ENCODE measurements at regions of chr3 and their contacts with region 1.

Region 1: DNA sequence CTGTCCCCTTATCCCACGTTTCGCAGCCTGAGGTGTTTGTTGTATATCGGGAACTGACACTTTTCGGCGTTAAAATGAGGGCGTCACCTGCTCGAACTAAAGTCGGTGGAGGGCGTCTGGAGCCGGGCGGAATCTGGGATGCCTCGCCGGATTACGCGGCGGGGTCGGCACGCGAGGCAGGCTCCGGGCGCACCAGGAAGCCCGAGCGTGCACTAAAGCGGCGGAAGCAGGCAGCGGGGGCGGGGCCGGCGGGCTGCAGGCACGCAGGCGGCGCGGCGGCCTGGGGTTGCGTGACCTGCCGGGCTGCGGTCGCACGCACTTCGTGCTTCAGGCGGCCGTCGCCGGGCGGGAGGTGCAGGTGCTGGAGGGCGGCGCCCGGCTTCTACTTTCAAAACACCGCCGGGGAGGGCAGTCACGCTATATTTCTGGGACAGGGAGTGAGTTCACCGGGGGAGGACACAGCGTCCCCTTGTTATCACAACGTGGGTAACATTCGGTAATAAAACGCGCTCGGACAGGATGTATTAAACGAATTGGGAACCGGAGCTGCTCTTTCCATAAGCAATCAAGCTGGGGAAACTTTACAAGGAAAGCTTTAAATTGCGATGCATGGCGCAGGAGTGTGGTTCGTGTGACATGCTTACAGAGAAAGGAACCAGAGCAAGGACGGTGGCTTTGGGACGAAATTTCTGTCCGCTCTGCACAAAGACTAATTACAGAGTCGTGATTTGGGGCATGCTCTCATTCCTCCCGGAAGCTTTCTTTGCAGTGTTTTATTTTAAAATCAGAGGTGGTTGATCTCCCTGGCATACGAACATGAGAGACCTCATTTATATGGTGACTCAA is 9.1 kb upstream of the LEKR1 start:
- DNase-seq: peak; percentile 85
- H3K4me3 ChIP-seq: peak overlapping the region; percentile 55 to 65 (median 61)
- H3K27ac ChIP-seq: peak overlapping the region; percentile 74 to 85 (median 82)
- H3K4me1 ChIP-seq: peaks cover 0 to 20% (median 9%) of the 10 kb centered on the region in 4 donors
- H3K27me3 ChIP-seq: no peaks in the 10 kb centered on the region
- CTCF ChIP-seq: no peak
- EP300 ChIP-seq: peak in 3 of 4 donors; percentile 55 to 87 (median 83)
- POLR2A ChIP-seq: no peak

Region 2: DNA sequence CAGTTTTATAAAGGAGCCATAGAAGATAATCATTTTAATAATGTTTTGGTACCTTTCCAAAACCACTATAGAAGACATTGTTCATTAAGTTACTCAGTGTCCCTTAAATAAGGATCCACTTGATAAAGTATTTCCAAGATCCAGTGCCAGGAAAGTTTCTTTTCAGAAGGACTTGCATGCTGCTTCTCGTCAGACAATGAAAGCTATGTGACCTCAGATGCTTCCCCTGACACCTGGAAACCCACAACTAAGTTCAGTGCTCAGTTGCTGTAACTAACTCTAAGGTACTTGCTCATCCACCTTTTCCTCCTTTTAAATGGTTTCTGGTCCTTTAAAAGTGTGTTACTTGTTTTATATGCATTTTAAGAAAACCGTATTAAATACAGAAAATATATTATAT is 269.4 kb before region 1 on chr3:
- intact Hi-C with region 1: loop called (anchors 5 kb)
- DNase-seq: no peak
- H3K4me3 ChIP-seq: no peak overlapping the region
- H3K27ac ChIP-seq: peak overlapping the region; percentile 65 to 77 (median 72)
- H3K4me1 ChIP-seq: peaks cover 0 to 100% (median 80%) of the 10 kb centered on the region in 4 donors
- H3K27me3 ChIP-seq: no peaks in the 10 kb centered on the region
- CTCF ChIP-seq: no peak
- EP300 ChIP-seq: peak in 1 of 4 donors; percentile 62
- POLR2A ChIP-seq: no peak

Region 3: DNA sequence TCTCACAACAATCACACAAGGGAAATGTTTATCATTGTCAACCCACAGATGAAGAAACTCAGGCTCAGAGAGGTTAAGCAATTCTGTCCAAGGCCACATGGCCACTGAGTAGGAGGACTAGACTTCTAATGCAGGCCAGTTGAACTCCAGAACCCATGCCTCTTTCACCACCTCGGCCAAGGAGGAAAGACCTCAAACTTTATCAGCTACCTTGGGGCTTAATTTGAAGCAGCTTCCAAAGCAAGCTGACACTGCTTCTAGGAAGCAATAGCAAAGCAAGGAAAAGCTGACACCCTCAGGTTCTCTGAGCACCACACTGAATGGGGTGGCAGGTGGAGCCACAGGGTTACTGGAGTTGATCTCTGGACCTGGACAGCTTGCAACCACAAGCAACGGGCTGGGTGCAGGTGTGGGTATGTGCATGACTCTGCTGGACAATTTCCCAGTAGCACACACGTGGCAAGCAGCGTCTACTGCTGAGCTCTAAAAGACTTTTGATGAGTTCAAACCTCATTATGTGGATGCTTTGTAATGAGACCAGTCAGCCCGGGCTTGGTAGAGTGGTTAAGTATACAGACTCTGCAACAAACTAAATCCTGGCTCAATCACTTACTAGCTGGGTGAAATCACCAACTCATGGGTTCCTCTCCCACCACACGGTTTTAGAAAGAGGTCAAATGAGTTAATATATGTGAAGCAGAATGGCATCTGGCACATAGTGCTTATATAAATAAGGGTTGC is 319.8 kb after region 1 on chr3:
- intact Hi-C with region 1: loop called (anchors 5 kb)
- DNase-seq: no peak
- H3K4me3 ChIP-seq: no peak overlapping the region
- H3K27ac ChIP-seq: peak overlapping the region; percentile 31 to 75 (median 68)
- H3K4me1 ChIP-seq: peaks cover 0 to 40% (median 21%) of the 10 kb centered on the region in 4 donors
- H3K27me3 ChIP-seq: no peaks in the 10 kb centered on the region
- CTCF ChIP-seq: no peak
- EP300 ChIP-seq: no peak
- POLR2A ChIP-seq: no peak